PC-9 (cell line): ENCODE measurements at regions of chr3 and their contacts with region 1.

Region 1: DNA sequence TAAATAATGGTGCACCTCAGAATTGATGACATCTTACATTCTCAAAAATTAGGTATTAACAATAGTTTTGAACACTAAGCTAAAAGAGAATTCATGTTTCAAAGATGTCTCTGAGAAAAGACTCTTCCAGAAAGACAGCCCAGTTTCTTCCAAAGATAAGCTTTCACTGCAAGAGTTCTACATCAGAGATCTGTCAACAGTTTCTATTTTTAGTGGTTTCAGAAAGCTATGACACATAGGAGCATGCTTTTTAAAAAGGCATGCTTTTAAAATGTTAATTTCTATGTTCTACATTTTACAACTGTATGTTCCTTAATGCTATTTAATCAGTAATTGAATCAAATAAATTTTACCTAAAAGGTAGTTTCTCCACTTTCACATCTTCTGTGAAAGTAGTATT is 88.2 kb downstream of the PLOD2 start:
- DNase-seq: no peak
- H3K4me3 ChIP-seq: no peak overlapping the region
- H3K27ac ChIP-seq: no peak overlapping the region
- H3K4me1 ChIP-seq: no peaks in the 10 kb centered on the region
- H3K27me3 ChIP-seq: no peaks in the 10 kb centered on the region
- CTCF ChIP-seq: no peak

Region 2: GRCh38 chr3:146111337-146111736 is 38.5 kb after region 1 on chr3:
- CTCF ChIA-PET with region 1: no interaction called
- POLR2A ChIA-PET with region 1: no interaction called
- intact Hi-C with region 1: loop called (anchors 1 kb)
- DNase-seq: no peak
- H3K4me3 ChIP-seq: no peak overlapping the region
- H3K27ac ChIP-seq: no peak overlapping the region
- H3K4me1 ChIP-seq: no peaks in the 10 kb centered on the region
- H3K27me3 ChIP-seq: no peaks in the 10 kb centered on the region
- CTCF ChIP-seq: no peak

Region 3: GRCh38 chr3:146160964-146161662 is 88.3 kb after region 1 on chr3 and contains the start of gene PLOD2:
- CTCF ChIA-PET with region 1: no interaction called
- POLR2A ChIA-PET with region 1: no interaction called
- intact Hi-C with region 1: loop called (anchors 2 kb)
- DNase-seq: peak; percentile 70 to 81
- H3K4me3 ChIP-seq: peak within 1 kb of the TSS; percentile 79
- H3K27ac ChIP-seq: peak within 1 kb of the TSS; percentile 48
- H3K4me1 ChIP-seq: peaks cover 27% of the 10 kb centered on the region
- H3K27me3 ChIP-seq: no peaks in the 10 kb centered on the region
- CTCF ChIP-seq: no peak
- total RNA-seq, gene PLOD2: 27.4 and 30.3 TPM in 2 replicates